ENCODE measurements at regions of chr9 and their contacts with region 1.

Region 1: GRCh38 chr9:107282753-107283625 is at the start of gene RAD23B:
- DNase-seq: peak; percentile 94 to 99 (median 98)
- H3K4me3 ChIP-seq: peak within 1 kb of the TSS; percentile 69 to 99 (median 93)
- H3K27ac ChIP-seq: peak within 1 kb of the TSS; percentile 89 to 100 (median 98)
- H3K27me3 ChIP-seq: no peaks in the 10 kb centered on the region
- CTCF ChIP-seq: peak in 27 of 56 donors; percentile 2 to 49 (median 28)
- total RNA-seq, gene RAD23B: 67.9 to 114 (median 93.7) TPM

Region 2: GRCh38 chr9:105694190-105694847 is 1588.7 kb before region 1 on chr9 and contains the start of gene TMEM38B:
- intact Hi-C with region 1: loop called in 1 of 2 experiments (anchors 5 kb)
- DNase-seq: peak; percentile 51 to 88 (median 75)
- H3K4me3 ChIP-seq: peak within 1 kb of the TSS; percentile 61 to 97 (median 87)
- H3K27ac ChIP-seq: peak within 1 kb of the TSS in 47 of 59 donors; percentile 10 to 86 (median 60)
- H3K27me3 ChIP-seq: peaks cover 0 to 6% (median 0%) of the 10 kb centered on the region in 45 donors
- CTCF ChIP-seq: peak in 6 of 56 donors; percentile 6 to 28 (median 17)
- total RNA-seq, gene TMEM38B: 8.0 to 29.9 (median 15.7) TPM

Region 3: GRCh38 chr9:107208121-107208520 is 74.9 kb before region 1 on chr9:
- intact Hi-C with region 1: no loop called
- DNase-seq: no peak
- H3K4me3 ChIP-seq: no peak overlapping the region
- H3K27ac ChIP-seq: no peak overlapping the region
- H3K27me3 ChIP-seq: peaks cover 0 to 4% (median 0%) of the 10 kb centered on the region in 45 donors
- CTCF ChIP-seq: no peak

Region 4: GRCh38 chr9:107336718-107337360 is 53.9 kb after region 1 on chr9:
- intact Hi-C with region 1: loop called (anchors 5 kb)
- DNase-seq: peak in 5 of 10 donors; percentile 28 to 66 (median 55)
- H3K4me3 ChIP-seq: no peak overlapping the region
- H3K27ac ChIP-seq: peak overlapping the region in 43 of 59 donors; percentile 0 to 83 (median 59)
- H3K27me3 ChIP-seq: no peaks in the 10 kb centered on the region
- CTCF ChIP-seq: no peak

Region 5: GRCh38 chr9:107351382-107352045 is 68.5 kb after region 1 on chr9:
- intact Hi-C with region 1: no loop called
- DNase-seq: no peak
- H3K4me3 ChIP-seq: no peak overlapping the region
- H3K27ac ChIP-seq: no peak overlapping the region
- H3K27me3 ChIP-seq: peaks cover 0 to 3% (median 0%) of the 10 kb centered on the region in 45 donors
- CTCF ChIP-seq: no peak

Region 6: GRCh38 chr9:107587191-107587963 is 304.4 kb after region 1 on chr9:
- intact Hi-C with region 1: no loop called
- DNase-seq: no peak
- H3K4me3 ChIP-seq: peak overlapping the region in 17 of 59 donors; percentile 2 to 43 (median 16)
- H3K27ac ChIP-seq: peak overlapping the region in 28 of 59 donors; percentile 4 to 79 (median 52)
- H3K27me3 ChIP-seq: no peaks in the 10 kb centered on the region
- CTCF ChIP-seq: no peak